Spleen (tissue), 13 donors: ENCODE measurements at regions of chr1 and their contacts with region 1.

Region 1: DNA sequence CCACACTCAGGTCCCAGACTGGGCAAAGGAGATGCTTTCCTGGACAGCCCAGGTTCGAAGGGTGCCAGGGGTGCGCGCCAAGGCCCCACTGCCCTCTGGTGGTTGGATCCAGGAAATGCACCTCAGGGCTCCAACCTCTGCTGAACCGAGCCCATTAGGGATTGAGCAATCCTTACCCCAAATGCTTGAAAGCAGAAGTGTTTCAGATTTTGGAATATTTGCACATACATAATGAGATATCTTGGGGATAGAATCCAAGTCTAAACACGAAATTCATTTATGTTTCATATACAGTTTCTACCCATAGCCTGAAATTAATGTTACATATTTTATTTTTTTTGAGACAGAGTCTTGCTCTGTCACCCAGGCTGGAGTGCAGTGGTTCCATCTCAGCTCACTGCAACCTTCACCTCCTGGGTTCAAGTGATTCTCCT is 57.4 kb downstream of the SLC9A1 start:
- DNase-seq: peak; percentile 92
- H3K4me3 ChIP-seq: no peak overlapping the region
- H3K27ac ChIP-seq: peak overlapping the region in 3 of 8 donors; percentile 1 to 80 (median 35)
- H3K4me1 ChIP-seq: peaks cover 17 to 44% (median 32%) of the 10 kb centered on the region in 6 donors
- H3K27me3 ChIP-seq: no peaks in the 10 kb centered on the region
- CTCF ChIP-seq: peak; percentile 94 to 99 (median 98)
- POLR2A ChIP-seq: no peak

Region 2: GRCh38 chr1:26993237-26994019 is 104.1 kb before region 1 on chr1 and contains the start of gene TRNP1:
- intact Hi-C with region 1: no loop called
- DNase-seq: peak; percentile 87
- H3K4me3 ChIP-seq: peak within 1 kb of the TSS; percentile 72 to 92 (median 78)
- H3K27ac ChIP-seq: peak within 1 kb of the TSS in 5 of 8 donors; percentile 27 to 72 (median 64)
- H3K4me1 ChIP-seq: peaks cover 15 to 64% (median 42%) of the 10 kb centered on the region in 6 donors
- H3K27me3 ChIP-seq: peaks cover 0 to 79% (median 23%) of the 10 kb centered on the region in 7 donors
- CTCF ChIP-seq: no peak
- POLR2A ChIP-seq: no peak
- total RNA-seq, gene TRNP1: 3.1 to 18.1 (median 6.8) TPM

Region 3: DNA sequence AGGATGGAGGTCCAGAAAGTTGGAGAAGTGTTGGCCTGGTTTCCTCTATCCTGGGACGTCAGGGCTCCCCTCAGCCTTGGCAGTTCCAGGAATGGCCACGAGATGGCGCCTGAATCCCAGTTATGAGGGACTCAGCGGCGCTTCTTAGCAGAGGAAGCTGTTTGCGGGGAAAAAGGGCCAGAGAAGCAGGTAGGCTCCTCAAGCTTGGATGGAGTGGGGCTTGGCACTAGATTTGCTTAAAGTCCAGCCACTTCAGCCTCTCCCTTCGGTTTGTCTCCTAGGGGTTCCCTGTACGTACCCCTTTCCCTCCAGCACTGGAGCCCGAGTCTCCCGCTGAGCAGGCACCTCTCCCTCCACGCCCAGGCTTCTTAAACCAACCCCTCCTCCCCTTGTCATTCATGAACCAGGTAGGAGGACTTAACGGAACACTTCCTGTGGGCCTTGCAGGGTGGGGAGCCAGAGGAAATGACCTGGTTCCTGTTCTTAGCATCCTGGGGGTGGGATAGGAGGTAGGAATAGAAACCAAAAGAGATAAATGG is 52.8 kb before region 1 on chr1:
- intact Hi-C with region 1: loop called (anchors 2 kb)
- DNase-seq: peak; percentile 96
- H3K4me3 ChIP-seq: peak overlapping the region in 4 of 8 donors; percentile 4 to 59 (median 18)
- H3K27ac ChIP-seq: peak overlapping the region in 4 of 8 donors; percentile 10 to 70 (median 43)
- H3K4me1 ChIP-seq: peaks cover 12 to 41% (median 29%) of the 10 kb centered on the region in 6 donors
- H3K27me3 ChIP-seq: no peaks in the 10 kb centered on the region
- CTCF ChIP-seq: peak; percentile 97 to 100 (median 99)
- POLR2A ChIP-seq: no peak